Sciatic nerve (tissue), 2 donors: ENCODE measurements at regions of chr1 and their contacts with region 1.

Region 1: GRCh38 chr1:184965944-184966860 is 8.1 kb downstream of the NIBAN1 start:
- DNase-seq: no peak
- ATAC-seq: no peak

Region 2: DNA sequence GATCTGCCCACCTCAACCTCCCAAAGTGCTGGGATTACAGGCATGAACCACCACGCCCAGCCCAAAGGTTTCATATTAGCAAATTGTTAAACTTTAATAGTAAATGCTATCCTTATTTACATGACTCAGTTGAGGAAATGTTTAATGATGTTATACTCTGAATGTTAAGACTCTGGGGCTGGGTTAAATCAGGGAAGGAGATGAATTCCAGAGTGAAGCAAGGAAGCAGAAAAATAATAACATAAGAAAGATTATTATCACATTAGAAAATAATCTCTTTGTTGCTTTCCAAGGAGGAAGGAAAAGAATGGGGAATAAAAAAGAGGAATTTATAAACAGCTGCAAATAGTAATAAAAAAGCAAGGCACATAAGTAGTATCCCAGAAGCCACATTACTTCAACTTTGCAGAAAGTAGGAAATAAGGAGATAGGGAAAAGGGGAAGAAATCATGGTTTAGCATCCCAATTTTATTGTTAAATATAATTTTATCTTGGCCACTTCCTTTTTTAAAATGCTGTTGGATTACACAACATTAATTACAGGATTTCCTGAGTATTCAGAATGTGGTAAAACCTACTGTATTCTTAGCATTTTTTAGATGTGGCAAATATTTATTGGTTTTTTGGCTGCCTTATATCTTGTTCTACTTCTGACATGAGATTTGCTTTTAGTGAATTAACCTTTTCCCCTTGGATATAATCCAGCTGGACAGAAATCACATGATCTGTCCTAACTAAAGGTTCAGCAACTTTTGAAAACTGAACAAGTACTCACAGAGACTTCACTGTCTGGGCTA is 1608.9 kb after region 1 on chr1:
- intact Hi-C with region 1: loop called (anchors 10 kb)
- DNase-seq: no peak
- ATAC-seq: no peak